ENCODE measurements at regions of chr16 and their contacts with region 1.

Region 1: GRCh38 chr16:68396481-68396880 is 51.8 kb downstream of the SMPD3 start:
- DNase-seq: peak; percentile 68
- ATAC-seq: peak; percentile 77
- H3K4me3 Mint-ChIP-seq: no peak overlapping the region
- H3K27ac Mint-ChIP-seq: no peak overlapping the region
- H3K4me1 Mint-ChIP-seq: peaks cover 7% of the 10 kb centered on the region
- H3K27me3 Mint-ChIP-seq: no peaks in the 10 kb centered on the region
- CTCF ChIP-seq: peak; percentile 60

Region 2: GRCh38 chr16:68351962-68352431 is 44.5 kb before region 1 on chr16:
- CTCF ChIA-PET with region 1: no interaction called
- POLR2A ChIA-PET with region 1: no interaction called
- intact Hi-C with region 1: no loop called
- DNase-seq: no peak
- ATAC-seq: no peak
- H3K4me3 Mint-ChIP-seq: no peak overlapping the region
- H3K27ac Mint-ChIP-seq: no peak overlapping the region
- H3K4me1 Mint-ChIP-seq: peaks cover 22% of the 10 kb centered on the region
- H3K27me3 Mint-ChIP-seq: no peaks in the 10 kb centered on the region
- CTCF ChIP-seq: no peak

Region 3: GRCh38 chr16:68406451-68407152 is 10.1 kb after region 1 on chr16:
- CTCF ChIA-PET with region 1: interaction called, 17 read pairs
- POLR2A ChIA-PET with region 1: interaction called, 8 read pairs
- intact Hi-C with region 1: no loop called
- DNase-seq: no peak
- ATAC-seq: no peak
- H3K4me3 Mint-ChIP-seq: no peak overlapping the region
- H3K27ac Mint-ChIP-seq: no peak overlapping the region
- H3K4me1 Mint-ChIP-seq: peaks cover under 1% of the 10 kb centered on the region
- H3K27me3 Mint-ChIP-seq: peaks cover 2% of the 10 kb centered on the region
- CTCF ChIP-seq: no peak

Region 4: DNA sequence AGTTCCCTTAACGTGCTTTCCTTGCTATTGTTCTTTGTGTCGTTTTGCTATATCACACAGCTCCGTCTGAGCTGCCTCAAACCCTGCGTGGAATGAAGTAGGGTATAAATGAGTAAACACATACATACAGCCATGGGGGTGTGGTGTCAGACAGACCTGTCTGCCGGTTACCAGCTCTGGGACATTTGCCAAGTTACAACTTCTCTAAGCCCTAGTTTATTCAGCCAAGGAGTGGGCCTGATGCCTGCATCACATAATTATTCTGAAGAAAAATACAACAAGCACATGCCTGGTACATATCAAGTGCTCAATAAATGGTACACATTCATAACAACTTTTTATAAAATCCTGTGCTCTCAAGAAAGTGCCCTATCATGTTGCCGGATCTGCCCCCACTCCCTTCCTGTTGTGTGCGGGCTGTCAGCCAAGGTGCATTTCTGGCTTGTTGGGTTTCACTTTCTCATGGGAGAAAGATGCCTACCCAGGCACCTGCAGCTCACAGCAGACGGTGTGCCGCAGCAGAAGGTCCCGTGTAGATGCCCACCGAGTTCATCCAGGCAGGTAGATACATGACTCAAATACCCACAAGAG is 21.3 kb after region 1 on chr16:
- CTCF ChIA-PET with region 1: interaction called, 22 read pairs
- POLR2A ChIA-PET with region 1: no interaction called
- intact Hi-C with region 1: no loop called
- DNase-seq: peak; percentile 84
- ATAC-seq: peak; percentile 93
- H3K4me3 Mint-ChIP-seq: peak overlapping the region; percentile 63
- H3K27ac Mint-ChIP-seq: peak overlapping the region; percentile 90
- H3K4me1 Mint-ChIP-seq: peaks cover 34% of the 10 kb centered on the region
- H3K27me3 Mint-ChIP-seq: no peaks in the 10 kb centered on the region
- CTCF ChIP-seq: no peak

Measured in activated CD8-positive, alpha-beta T cell treated with anti-CD3 and anti-CD28 coated beads for 36 hours (primary cell).